Ascending aorta (tissue), 2 donors: ENCODE measurements at regions of chr14 and their contacts with region 1.

Region 1: GRCh38 chr14:23034483-23035302 is at the start of gene PSMB5:
- DNase-seq: peak; percentile 61 to 95
- H3K4me3 ChIP-seq: peak within 1 kb of the TSS; percentile 72 to 80
- H3K27ac ChIP-seq: peak within 1 kb of the TSS; percentile 91 to 93
- H3K4me1 ChIP-seq: peaks cover 7 to 8% of the 10 kb centered on the region in 2 donors
- H3K27me3 ChIP-seq: no peaks in the 10 kb centered on the region
- CTCF ChIP-seq: no peak
- total RNA-seq, gene PSMB5: 62.7 TPM

Region 2: GRCh38 chr14:23006544-23007419 is 27.9 kb before region 1 on chr14:
- intact Hi-C with region 1: loop called (anchors 1 kb)
- DNase-seq: peak; percentile 87 to 98
- H3K4me3 ChIP-seq: peak overlapping the region; percentile 82 to 83
- H3K27ac ChIP-seq: peak overlapping the region; percentile 85 to 88
- H3K4me1 ChIP-seq: peaks cover 3 to 9% of the 10 kb centered on the region in 2 donors
- H3K27me3 ChIP-seq: no peaks in the 10 kb centered on the region
- CTCF ChIP-seq: peak in 1 of 3 experiments; percentile 24

Region 3: GRCh38 chr14:23057757-23058653 is 23.3 kb after region 1 on chr14:
- intact Hi-C with region 1: loop called (anchors 1 kb)
- DNase-seq: peak; percentile 28 to 86
- H3K4me3 ChIP-seq: peak overlapping the region; percentile 60 to 95
- H3K27ac ChIP-seq: peak overlapping the region in 1 of 2 donors; percentile 73
- H3K4me1 ChIP-seq: peaks cover 3 to 23% of the 10 kb centered on the region in 2 donors
- H3K27me3 ChIP-seq: no peaks in the 10 kb centered on the region
- CTCF ChIP-seq: peak; percentile 87 to 96 (median 92)

Region 4: GRCh38 chr14:23095196-23096108 is 60.8 kb after region 1 on chr14 and contains the start of gene C14orf119:
- intact Hi-C with region 1: loop called (anchors 1 kb)
- DNase-seq: peak; percentile 99 to 100
- H3K4me3 ChIP-seq: peak within 1 kb of the TSS; percentile 78 to 86
- H3K27ac ChIP-seq: peak within 1 kb of the TSS; percentile 97 to 98
- H3K4me1 ChIP-seq: peaks cover 0 to 22% of the 10 kb centered on the region in 2 donors
- H3K27me3 ChIP-seq: no peaks in the 10 kb centered on the region
- CTCF ChIP-seq: no peak
- total RNA-seq, gene C14orf119: 2.2 TPM